Ovary (tissue), 10 donors: ENCODE measurements at regions of chr1 and their contacts with region 1.

Region 1: GRCh38 chr1:157878059-157878458 is 36.5 kb upstream of the CD5L start:
- DNase-seq: no peak
- H3K4me3 ChIP-seq: no peak overlapping the region
- H3K27ac ChIP-seq: no peak overlapping the region
- H3K4me1 ChIP-seq: no peaks in the 10 kb centered on the region
- H3K27me3 ChIP-seq: no peaks in the 10 kb centered on the region
- CTCF ChIP-seq: no peak
- EP300 ChIP-seq: no peak
- POLR2A ChIP-seq: no peak

Region 2: GRCh38 chr1:157894613-157895165 is 16.6 kb after region 1 on chr1:
- intact Hi-C with region 1: loop called in 1 of 4 experiments (anchors 2 kb)
- DNase-seq: no peak
- H3K4me3 ChIP-seq: no peak overlapping the region
- H3K27ac ChIP-seq: no peak overlapping the region
- H3K4me1 ChIP-seq: no peaks in the 10 kb centered on the region
- H3K27me3 ChIP-seq: no peaks in the 10 kb centered on the region
- CTCF ChIP-seq: no peak
- EP300 ChIP-seq: no peak
- POLR2A ChIP-seq: no peak